ENCODE measurements at regions of chr20 and their contacts with region 1.

Region 1: DNA sequence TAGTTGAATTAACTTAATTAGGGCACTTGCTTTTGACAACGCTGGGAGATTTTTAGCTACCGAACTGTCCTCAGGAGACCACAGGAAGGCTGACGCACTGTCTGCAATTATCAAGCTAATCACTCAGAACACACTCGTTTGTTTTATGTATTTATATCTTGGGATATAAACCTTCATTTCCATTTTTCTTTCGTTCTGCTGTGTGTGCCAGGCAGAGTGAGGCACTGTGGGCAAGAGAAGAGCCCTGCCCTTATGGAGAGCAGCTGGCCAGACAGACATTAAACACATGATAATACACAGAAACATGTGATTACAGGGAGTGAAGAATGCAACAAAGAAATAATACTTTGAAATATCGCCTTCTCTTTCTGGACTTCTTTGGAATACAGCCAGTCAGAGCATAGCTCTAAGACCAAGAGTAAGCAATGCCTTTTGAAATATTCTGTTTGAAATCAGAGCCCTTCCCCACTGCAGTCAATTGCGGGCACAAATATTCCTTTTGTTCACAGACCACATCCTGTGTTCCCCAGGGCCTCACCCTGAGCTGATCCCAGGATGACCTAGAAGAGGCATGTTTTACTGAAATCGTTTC is 96.8 kb downstream of the ANKRD60 start:
- DNase-seq: peak in 1 of 2 donors; percentile 13
- H3K4me3 ChIP-seq: peak overlapping the region in 1 of 3 donors; percentile 6
- H3K27ac ChIP-seq: no peak overlapping the region
- H3K4me1 ChIP-seq: peaks cover 0 to 6% of the 10 kb centered on the region in 2 donors
- H3K27me3 ChIP-seq: no peaks in the 10 kb centered on the region
- CTCF ChIP-seq: no peak
- POLR2A ChIP-seq: no peak

Region 2: DNA sequence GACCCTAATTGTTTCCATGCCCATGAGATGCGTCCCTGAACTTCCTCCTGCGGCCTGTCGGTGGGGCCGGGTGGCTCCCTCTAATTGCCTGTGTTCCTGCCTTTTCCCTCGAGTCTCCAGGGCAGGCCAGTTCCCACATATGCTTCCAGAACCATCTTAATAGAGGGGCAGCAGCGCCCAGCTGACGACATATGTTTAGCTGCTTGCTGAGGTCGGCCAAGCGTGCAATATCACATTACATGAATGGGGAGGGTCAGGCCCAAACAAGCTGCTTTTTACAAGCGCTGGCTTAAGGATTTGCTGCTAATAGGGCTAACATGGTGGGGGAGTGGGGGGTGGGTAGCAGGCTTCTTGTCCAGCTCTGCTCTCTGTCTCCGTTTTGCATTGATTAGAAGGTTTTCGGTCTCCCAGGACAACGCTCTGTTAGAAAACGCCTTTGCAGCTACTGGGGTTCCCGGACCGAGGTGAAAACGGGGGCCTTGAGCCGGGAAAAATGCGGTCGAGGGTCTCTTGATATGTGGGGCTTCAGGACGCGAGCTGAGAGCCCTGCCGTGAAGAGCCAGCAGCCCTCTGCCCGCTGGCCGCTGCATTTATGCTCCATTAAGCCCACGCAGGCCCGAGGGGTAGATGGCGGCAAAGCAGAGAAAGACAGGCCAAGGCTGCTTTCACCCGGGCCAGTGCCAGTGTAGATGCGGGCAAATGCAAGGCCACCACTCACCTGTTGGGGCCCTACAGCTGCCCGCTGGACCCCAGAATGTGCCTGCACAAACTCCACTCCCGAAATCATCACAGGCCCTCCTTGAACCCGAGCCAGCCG is 1173.7 kb before region 1 on chr20:
- intact Hi-C with region 1: loop called (anchors 5 kb)
- DNase-seq: no peak
- H3K4me3 ChIP-seq: no peak overlapping the region
- H3K27ac ChIP-seq: no peak overlapping the region
- H3K4me1 ChIP-seq: no peaks in the 10 kb centered on the region
- H3K27me3 ChIP-seq: peaks cover 0 to 13% of the 10 kb centered on the region in 2 donors
- CTCF ChIP-seq: no peak
- POLR2A ChIP-seq: no peak

Region 3: DNA sequence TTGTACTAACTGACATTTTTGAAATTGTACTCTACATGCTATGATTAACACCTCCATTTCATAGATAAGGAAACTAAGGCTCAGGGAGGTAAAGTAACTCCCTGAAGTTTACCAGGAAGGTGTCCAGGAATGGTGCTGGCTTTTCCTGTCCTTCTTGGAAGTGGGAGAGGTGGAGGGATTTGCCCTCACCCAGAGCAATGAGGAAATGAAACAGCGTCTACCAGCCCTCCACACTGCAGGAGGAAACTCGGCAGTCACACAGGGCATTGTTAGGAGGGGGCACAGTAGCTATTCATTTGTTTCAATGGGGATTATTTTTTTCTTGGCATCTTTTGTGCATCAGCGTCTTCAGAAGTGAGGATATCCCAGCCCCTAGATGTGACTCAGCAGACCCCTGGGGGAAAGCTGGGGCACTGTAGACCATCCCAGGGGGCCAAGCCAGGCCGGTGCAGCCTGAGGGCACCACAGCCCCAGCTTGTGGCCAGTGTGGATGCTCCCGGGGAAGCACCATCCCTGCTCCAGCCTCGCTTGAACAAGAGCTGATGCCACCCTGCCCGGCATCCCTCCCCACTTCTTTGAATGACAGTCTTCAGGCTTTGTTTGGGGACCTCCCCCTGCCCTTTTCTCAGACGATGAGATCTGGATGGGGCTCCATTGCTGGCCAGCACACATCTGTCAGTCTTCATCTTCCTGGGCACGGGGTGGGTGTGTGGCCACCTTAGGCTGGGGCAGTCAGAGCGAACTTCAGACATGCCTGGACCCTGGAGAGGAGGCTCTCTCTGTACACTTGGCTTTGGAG is 197.4 kb before region 1 on chr20:
- intact Hi-C with region 1: loop called (anchors 5 kb)
- DNase-seq: no peak
- H3K4me3 ChIP-seq: no peak overlapping the region
- H3K27ac ChIP-seq: no peak overlapping the region
- H3K4me1 ChIP-seq: no peaks in the 10 kb centered on the region
- H3K27me3 ChIP-seq: no peaks in the 10 kb centered on the region
- CTCF ChIP-seq: no peak
- POLR2A ChIP-seq: no peak

Region 4: DNA sequence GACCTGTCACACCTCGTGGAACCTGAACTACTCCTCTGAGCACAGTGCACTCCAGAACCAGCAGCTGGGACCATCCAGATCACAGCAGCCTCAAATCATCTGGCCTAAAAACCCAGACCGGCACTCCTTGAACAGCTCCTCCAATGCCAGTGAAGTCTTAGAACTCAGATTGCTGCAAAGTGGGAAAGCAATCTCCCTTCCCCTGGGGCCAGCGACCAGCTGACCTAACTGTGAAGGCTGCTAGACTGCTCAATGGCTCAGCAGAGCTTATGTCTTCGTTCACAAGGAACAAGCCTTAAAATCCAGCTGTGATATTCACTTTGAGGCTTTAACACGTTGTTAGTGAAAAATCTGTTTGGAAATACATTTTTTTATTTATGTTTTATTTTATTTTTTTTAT is 146.4 kb before region 1 on chr20:
- intact Hi-C with region 1: no loop called
- DNase-seq: no peak
- H3K4me3 ChIP-seq: no peak overlapping the region
- H3K27ac ChIP-seq: no peak overlapping the region
- H3K4me1 ChIP-seq: peaks cover 0 to under 1% of the 10 kb centered on the region in 2 donors
- H3K27me3 ChIP-seq: no peaks in the 10 kb centered on the region
- CTCF ChIP-seq: no peak
- POLR2A ChIP-seq: no peak

Measured in breast epithelium (tissue), 4 donors.